ENCODE measurements at regions of chr6 and their contacts with region 1.

Region 1: DNA sequence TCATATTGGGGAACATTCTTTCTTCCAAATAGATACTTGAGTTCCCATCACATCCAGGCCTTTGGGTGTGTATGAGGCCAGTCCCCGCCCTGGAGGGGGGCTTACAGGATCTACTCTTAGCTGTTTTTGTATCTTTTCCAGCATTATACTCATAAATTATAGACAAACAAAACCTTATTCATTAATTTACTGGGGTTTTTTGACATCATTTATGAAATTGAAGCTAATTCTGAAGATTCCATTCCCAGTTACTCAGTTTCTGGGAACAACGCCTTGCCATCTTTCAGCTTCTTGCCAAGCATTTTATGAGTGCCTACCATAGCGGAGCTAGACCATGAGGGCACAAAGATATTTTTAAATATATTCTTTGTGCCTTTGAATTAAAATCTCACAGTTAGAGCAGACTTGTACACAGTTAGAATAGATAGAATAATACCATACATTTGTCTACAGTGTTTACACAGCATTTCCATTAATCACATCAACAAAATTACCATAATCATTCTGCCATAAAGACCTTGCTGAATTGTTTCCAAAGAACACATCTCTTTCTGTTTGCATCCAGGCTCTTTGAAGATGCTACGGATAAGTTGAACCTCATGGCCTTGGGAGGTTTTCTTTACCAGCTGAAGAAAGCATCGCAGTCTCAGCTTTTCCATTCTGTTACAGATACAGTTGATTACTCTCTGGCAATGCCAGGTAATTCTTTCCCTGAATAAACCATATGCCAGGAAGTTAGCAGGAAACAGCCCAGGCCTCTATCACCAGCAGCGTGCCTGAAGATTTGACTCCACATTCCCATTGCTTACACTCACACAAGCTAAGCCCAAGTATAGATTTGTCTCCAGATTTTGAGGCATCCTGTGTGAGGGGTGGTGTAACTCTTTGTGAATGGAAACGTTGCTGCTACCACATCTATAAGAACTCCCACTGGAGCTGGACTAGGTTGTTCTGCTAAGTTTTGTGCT is 75.4 kb upstream of the PBOV1 start:
- DNase-seq: no peak
- H3K4me3 ChIP-seq: no peak overlapping the region
- H3K27ac ChIP-seq: no peak overlapping the region
- H3K4me1 ChIP-seq: no peaks in the 10 kb centered on the region
- H3K27me3 ChIP-seq: no peaks in the 10 kb centered on the region
- CTCF ChIP-seq: no peak
- EP300 ChIP-seq: no peak
- POLR2A ChIP-seq: no peak

Region 2: GRCh38 chr6:137776786-137777686 is 516.7 kb before region 1 on chr6:
- in situ Hi-C with region 1: no loop called
- intact Hi-C with region 1: no loop called
- DNase-seq: peak; percentile 22
- H3K4me3 ChIP-seq: no peak overlapping the region
- H3K27ac ChIP-seq: peak overlapping the region; percentile 38 to 51 (median 48)
- H3K4me1 ChIP-seq: peaks cover 3 to 18% (median 5%) of the 10 kb centered on the region in 4 donors
- H3K27me3 ChIP-seq: no peaks in the 10 kb centered on the region
- CTCF ChIP-seq: no peak
- EP300 ChIP-seq: no peak
- POLR2A ChIP-seq: no peak

Region 3: DNA sequence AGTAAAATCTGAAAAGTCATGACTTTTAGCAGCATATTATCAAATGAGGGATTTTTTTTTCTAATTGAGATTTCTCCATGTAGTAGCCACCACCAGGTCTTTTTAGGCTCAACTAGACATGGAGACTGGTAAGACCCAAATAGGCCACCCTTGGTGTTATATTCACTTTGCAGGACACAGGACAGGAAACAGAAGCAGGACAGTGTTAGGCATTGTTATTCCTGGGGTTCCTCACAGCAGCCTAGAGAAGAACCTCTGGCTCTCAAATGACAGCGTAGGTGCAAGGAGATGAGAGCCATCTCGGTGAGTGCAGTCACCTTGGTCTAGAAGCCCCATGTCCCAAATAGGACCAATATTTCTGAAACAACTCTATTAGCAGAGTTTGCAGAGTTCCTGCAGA is 56.2 kb before region 1 on chr6:
- in situ Hi-C with region 1: no loop called
- intact Hi-C with region 1: loop called (anchors 2 kb)
- DNase-seq: no peak
- H3K4me3 ChIP-seq: no peak overlapping the region
- H3K27ac ChIP-seq: no peak overlapping the region
- H3K4me1 ChIP-seq: no peaks in the 10 kb centered on the region
- H3K27me3 ChIP-seq: no peaks in the 10 kb centered on the region
- CTCF ChIP-seq: no peak
- EP300 ChIP-seq: no peak
- POLR2A ChIP-seq: no peak

Region 4: GRCh38 chr6:138662471-138662870 is 368.8 kb after region 1 on chr6:
- in situ Hi-C with region 1: no loop called
- intact Hi-C with region 1: no loop called
- DNase-seq: no peak
- H3K4me3 ChIP-seq: no peak overlapping the region
- H3K27ac ChIP-seq: no peak overlapping the region
- H3K4me1 ChIP-seq: no peaks in the 10 kb centered on the region
- H3K27me3 ChIP-seq: no peaks in the 10 kb centered on the region
- CTCF ChIP-seq: no peak
- EP300 ChIP-seq: no peak
- POLR2A ChIP-seq: no peak

Measured in transverse colon (tissue), 4 donors.